ENCODE measurements at regions of chr15 and their contacts with region 1.

Region 1: GRCh38 chr15:101008158-101009139 is 89.3 kb downstream of the LRRK1 start:
- DNase-seq: peak; percentile 90 to 94 (median 93)
- ATAC-seq: peak; percentile 96
- H3K4me3 ChIP-seq: no peak overlapping the region
- H3K4me1 ChIP-seq: peaks cover 14% of the 10 kb centered on the region
- CTCF ChIP-seq: peak; percentile 97

Region 2: GRCh38 chr15:100633763-100634075 is 374.7 kb before region 1 on chr15:
- intact Hi-C with region 1: loop called in 1 of 2 experiments (anchors 5 kb)
- DNase-seq: no peak
- ATAC-seq: no peak
- H3K4me3 ChIP-seq: no peak overlapping the region
- H3K4me1 ChIP-seq: peaks cover 15% of the 10 kb centered on the region
- CTCF ChIP-seq: no peak

Region 3: GRCh38 chr15:100909991-100910955 is 98.2 kb before region 1 on chr15:
- intact Hi-C with region 1: loop called (anchors 5 kb)
- DNase-seq: no peak
- ATAC-seq: no peak
- H3K4me3 ChIP-seq: no peak overlapping the region
- H3K4me1 ChIP-seq: no peaks in the 10 kb centered on the region
- CTCF ChIP-seq: no peak

Region 4: DNA sequence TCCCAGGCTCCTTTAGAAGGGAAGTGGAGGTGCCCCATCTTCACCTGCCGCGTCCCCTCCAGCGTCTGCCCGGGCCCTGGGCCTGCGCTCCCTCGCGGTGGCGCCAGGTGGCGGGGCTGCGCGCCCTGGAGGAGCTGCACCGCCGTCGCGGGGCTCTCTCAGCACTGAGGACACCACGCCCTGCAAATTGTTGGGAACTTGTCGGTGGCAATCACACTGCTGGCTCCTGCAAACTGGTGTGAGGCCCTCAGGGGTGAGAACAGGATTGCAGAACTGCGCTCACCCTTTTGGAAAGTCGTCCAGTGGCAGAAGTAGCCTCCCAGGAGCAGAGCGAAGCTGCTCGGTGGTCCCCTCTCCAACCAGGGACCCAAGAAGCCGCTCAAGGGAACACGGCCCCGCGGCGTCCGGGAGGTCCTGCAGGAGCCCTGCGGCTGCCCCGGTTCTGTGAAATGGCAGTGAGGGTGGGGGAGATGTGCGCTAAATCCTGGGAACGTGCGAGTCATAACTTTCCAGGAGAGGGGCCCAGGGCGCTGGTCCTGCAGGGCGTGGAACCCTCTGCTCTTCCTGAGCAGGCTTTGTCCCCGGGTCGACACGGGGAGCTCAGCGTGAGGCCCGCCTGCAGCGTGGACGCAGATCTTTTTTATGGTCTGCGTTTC is 90.3 kb before region 1 on chr15:
- intact Hi-C with region 1: loop called (anchors 5 kb)
- DNase-seq: peak; percentile 90 to 91 (median 91)
- ATAC-seq: peak; percentile 93
- H3K4me3 ChIP-seq: peak overlapping the region; percentile 54
- H3K4me1 ChIP-seq: peaks cover 7% of the 10 kb centered on the region
- CTCF ChIP-seq: peak; percentile 94

Region 5: GRCh38 chr15:101068961-101069653 is 60.7 kb after region 1 on chr15:
- intact Hi-C with region 1: no loop called
- DNase-seq: peak in 2 of 3 donors; percentile 30 to 59
- ATAC-seq: peak; percentile 20
- H3K4me3 ChIP-seq: no peak overlapping the region
- H3K4me1 ChIP-seq: no peaks in the 10 kb centered on the region
- CTCF ChIP-seq: no peak

Measured in mucosa of descending colon (tissue), 3 donors.